ENCODE measurements at regions of chr7 and their contacts with region 1.

Region 1: DNA sequence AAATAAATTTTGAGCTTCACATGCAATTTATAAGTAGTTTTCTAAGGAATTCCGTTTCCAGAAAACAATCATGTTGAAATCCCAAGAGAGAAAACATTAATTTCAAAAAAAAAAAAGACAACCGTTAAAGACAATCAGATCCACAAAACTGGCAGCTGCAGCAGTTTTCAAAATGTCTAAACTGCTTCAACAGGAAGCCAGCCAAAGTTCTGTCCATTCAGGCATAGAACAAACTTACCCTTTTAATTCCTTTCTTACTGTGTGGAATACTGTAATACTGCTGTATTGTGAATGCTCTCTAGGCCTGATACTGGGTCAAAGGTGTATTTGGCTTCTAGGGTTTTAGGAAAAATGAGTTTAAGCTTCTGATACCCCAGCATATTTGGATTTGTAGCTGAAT is 31.6 kb downstream of the HOXA1 start:
- DNase-seq: no peak
- ATAC-seq: no peak
- H3K4me3 ChIP-seq: no peak overlapping the region
- H3K27ac ChIP-seq: no peak overlapping the region
- H3K4me1 ChIP-seq: no peaks in the 10 kb centered on the region
- H3K27me3 ChIP-seq: no peaks in the 10 kb centered on the region
- CTCF ChIP-seq: no peak
- EP300 ChIP-seq: no peak
- POLR2A ChIP-seq: no peak
- RAD21 ChIP-seq: no peak

Region 2: GRCh38 chr7:27080844-27081436 is 16.8 kb after region 1 on chr7:
- CTCF ChIA-PET with region 1: interaction called, 3 read pairs
- POLR2A ChIA-PET with region 1: interaction called, 8 read pairs
- RAD21 ChIA-PET with region 1: interaction called, 5 read pairs
- SMC1A ChIA-PET with region 1: interaction called, 12 read pairs
- in situ Hi-C with region 1: no loop called
- intact Hi-C with region 1: no loop called
- DNase-seq: no peak
- ATAC-seq: no peak
- H3K4me3 ChIP-seq: no peak overlapping the region
- H3K27ac ChIP-seq: no peak overlapping the region
- H3K4me1 ChIP-seq: no peaks in the 10 kb centered on the region
- H3K27me3 ChIP-seq: no peaks in the 10 kb centered on the region
- CTCF ChIP-seq: no peak
- EP300 ChIP-seq: no peak
- POLR2A ChIP-seq: no peak
- RAD21 ChIP-seq: no peak